PC-3 (cell line): ENCODE measurements at regions of chr2 and their contacts with region 1.

Region 1: GRCh38 chr2:77507657-77508056 is 14.5 kb downstream of the LRRTM4 start:
- DNase-seq: no peak
- ATAC-seq: no peak
- H3K4me3 ChIP-seq: no peak overlapping the region
- H3K27ac ChIP-seq: no peak overlapping the region
- H3K4me1 ChIP-seq: no peaks in the 10 kb centered on the region
- H3K27me3 ChIP-seq: no peaks in the 10 kb centered on the region
- CTCF ChIP-seq: no peak

Region 2: GRCh38 chr2:76692908-76693307 is 814.7 kb before region 1 on chr2:
- CTCF ChIA-PET with region 1: no interaction called
- POLR2A ChIA-PET with region 1: no interaction called
- intact Hi-C with region 1: loop called (anchors 5 kb)
- DNase-seq: no peak
- ATAC-seq: no peak
- H3K4me3 ChIP-seq: no peak overlapping the region
- H3K27ac ChIP-seq: no peak overlapping the region
- H3K4me1 ChIP-seq: no peaks in the 10 kb centered on the region
- H3K27me3 ChIP-seq: peaks cover 9% of the 10 kb centered on the region; the same call in 1 of the 2 replicates
- CTCF ChIP-seq: no peak